A673 (cell line): ENCODE measurements at regions of chr7 and their contacts with region 1.

Region 1: DNA sequence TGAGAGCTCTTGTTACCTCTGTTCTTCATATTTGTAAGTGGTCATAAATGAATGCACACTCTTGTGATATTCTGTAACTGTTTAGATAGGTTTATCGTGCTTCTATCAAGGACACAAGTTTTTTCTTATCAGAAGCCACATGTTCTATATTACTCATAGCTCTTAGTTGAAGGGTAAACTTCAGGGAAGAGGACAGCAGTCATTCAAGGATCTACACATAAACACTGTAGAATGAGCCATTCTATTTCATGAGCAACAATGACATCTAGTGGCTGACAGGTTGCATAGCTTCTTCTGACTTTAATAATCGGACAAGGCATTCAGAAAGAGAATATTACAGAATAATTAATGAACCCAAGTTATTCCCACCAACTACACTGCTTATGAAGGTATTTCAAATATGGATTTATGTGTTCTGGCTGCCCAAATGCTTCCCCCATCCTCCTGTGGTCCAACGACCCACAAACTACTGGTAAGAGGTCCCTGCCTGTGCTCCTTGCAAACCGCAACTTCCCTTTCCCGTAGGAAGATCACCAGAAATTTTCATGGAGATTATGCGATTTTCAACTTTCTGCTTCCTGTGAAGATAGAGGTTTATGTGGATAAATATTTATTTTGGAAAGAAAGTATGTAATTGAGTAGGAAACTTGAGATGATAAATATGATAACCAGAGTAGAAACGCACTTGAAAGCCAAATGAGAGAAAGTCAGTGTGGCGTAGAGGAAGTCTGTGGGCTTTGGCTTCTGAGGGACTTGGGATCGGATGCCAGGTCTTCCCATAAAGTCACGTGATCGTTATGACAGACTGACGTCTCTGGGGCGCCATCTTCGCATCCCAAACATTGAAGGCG is 16.8 kb upstream of the ABCB5 start:
- DNase-seq: peak; percentile 74
- H3K4me3 ChIP-seq: peak overlapping the region; percentile 36
- H3K27ac ChIP-seq: no peak overlapping the region
- H3K4me1 ChIP-seq: no peaks in the 10 kb centered on the region
- H3K27me3 ChIP-seq: no peaks in the 10 kb centered on the region
- CTCF ChIP-seq: peak; percentile 82

Region 2: GRCh38 chr7:19747740-19748339 is 850.8 kb before region 1 on chr7:
- CTCF ChIA-PET with region 1: interaction called, 13 read pairs
- POLR2A ChIA-PET with region 1: no interaction called
- intact Hi-C with region 1: loop called (anchors 2 kb)
- DNase-seq: peak; percentile 41
- H3K4me3 ChIP-seq: no peak overlapping the region
- H3K27ac ChIP-seq: no peak overlapping the region
- H3K4me1 ChIP-seq: no peaks in the 10 kb centered on the region
- H3K27me3 ChIP-seq: peaks cover 47% of the 10 kb centered on the region
- CTCF ChIP-seq: peak; percentile 70

Region 3: GRCh38 chr7:19982841-19983835 is 615.5 kb before region 1 on chr7:
- CTCF ChIA-PET with region 1: interaction called, 13 read pairs
- POLR2A ChIA-PET with region 1: no interaction called
- intact Hi-C with region 1: loop called (anchors 2 kb)
- DNase-seq: peak; percentile 53
- H3K4me3 ChIP-seq: no peak overlapping the region
- H3K27ac ChIP-seq: no peak overlapping the region
- H3K4me1 ChIP-seq: no peaks in the 10 kb centered on the region
- H3K27me3 ChIP-seq: peaks cover 2% of the 10 kb centered on the region
- CTCF ChIP-seq: peak; percentile 46

Region 4: GRCh38 chr7:20095436-20095835 is 503.2 kb before region 1 on chr7:
- CTCF ChIA-PET with region 1: no interaction called
- POLR2A ChIA-PET with region 1: no interaction called
- intact Hi-C with region 1: no loop called
- DNase-seq: no peak
- H3K4me3 ChIP-seq: no peak overlapping the region
- H3K27ac ChIP-seq: no peak overlapping the region
- H3K4me1 ChIP-seq: no peaks in the 10 kb centered on the region
- H3K27me3 ChIP-seq: no peaks in the 10 kb centered on the region
- CTCF ChIP-seq: no peak

Region 5: GRCh38 chr7:20330240-20330927 is 268.3 kb before region 1 on chr7 and contains the start of gene ITGB8:
- CTCF ChIA-PET with region 1: interaction called, 9 read pairs
- POLR2A ChIA-PET with region 1: no interaction called
- intact Hi-C with region 1: loop called (anchors 2 kb)
- DNase-seq: peak; percentile 85
- H3K4me3 ChIP-seq: peak within 1 kb of the TSS; percentile 61
- H3K27ac ChIP-seq: peak within 1 kb of the TSS; percentile 28
- H3K4me1 ChIP-seq: peaks cover 2% of the 10 kb centered on the region
- H3K27me3 ChIP-seq: peaks cover 7% of the 10 kb centered on the region
- CTCF ChIP-seq: no peak
- total RNA-seq, gene ITGB8: 0.90 and 1.3 TPM in 2 replicates

Region 6: GRCh38 chr7:20542594-20542993 is 56.1 kb before region 1 on chr7:
- CTCF ChIA-PET with region 1: interaction called, 3 read pairs
- POLR2A ChIA-PET with region 1: no interaction called
- intact Hi-C with region 1: loop called (anchors 5 kb)
- DNase-seq: no peak
- H3K4me3 ChIP-seq: no peak overlapping the region
- H3K27ac ChIP-seq: no peak overlapping the region
- H3K4me1 ChIP-seq: peaks cover 20% of the 10 kb centered on the region
- H3K27me3 ChIP-seq: no peaks in the 10 kb centered on the region
- CTCF ChIP-seq: no peak

Region 7: DNA sequence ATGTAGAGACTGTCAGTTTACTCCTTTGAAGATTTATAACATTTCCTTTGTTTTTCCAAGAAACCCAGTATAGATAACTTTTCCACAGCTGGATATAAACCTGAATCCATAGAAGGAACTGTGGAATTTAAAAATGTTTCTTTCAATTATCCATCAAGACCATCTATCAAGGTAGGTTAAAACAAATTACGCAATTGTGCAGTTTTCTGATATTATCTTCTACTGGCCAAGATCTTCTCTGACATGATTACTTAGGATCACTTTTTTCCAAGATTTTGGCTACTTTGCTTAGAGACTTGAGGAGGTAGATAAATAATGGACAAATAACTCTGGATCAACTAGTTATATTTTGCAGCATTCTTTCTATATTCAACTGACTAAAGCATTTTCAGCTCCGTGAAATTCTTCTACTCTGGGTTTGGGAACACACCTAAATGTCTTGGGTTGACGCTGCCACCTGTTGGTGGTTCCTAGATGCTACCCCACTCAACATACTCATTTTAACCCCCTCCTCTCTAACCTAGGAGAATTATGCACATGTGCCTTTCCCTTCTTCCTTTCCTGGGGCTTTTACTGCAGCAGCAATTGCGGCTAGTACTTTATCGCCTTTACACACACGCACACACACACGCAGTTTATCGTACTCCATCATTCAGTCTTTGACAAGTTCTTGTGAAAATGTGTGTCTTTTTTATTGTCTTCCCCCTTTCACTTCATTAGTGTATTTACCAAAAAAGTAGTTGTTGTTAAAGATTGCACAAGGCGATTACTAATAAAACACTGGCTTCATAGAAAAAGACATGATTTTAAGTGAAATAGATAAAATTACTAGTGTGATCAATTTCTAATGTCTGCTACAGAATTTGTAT is 49.5 kb after region 1 on chr7:
- CTCF ChIA-PET with region 1: no interaction called
- POLR2A ChIA-PET with region 1: no interaction called
- intact Hi-C with region 1: no loop called
- DNase-seq: peak; percentile 38
- H3K4me3 ChIP-seq: no peak overlapping the region
- H3K27ac ChIP-seq: no peak overlapping the region
- H3K4me1 ChIP-seq: no peaks in the 10 kb centered on the region
- H3K27me3 ChIP-seq: peaks cover 72% of the 10 kb centered on the region
- CTCF ChIP-seq: peak; percentile 52

Region 8: GRCh38 chr7:20754001-20754400 is 155.3 kb after region 1 on chr7:
- CTCF ChIA-PET with region 1: no interaction called
- POLR2A ChIA-PET with region 1: no interaction called
- intact Hi-C with region 1: no loop called
- DNase-seq: no peak
- H3K4me3 ChIP-seq: no peak overlapping the region
- H3K27ac ChIP-seq: no peak overlapping the region
- H3K4me1 ChIP-seq: no peaks in the 10 kb centered on the region
- H3K27me3 ChIP-seq: peaks cover 37% of the 10 kb centered on the region
- CTCF ChIP-seq: no peak